Tibial artery (tissue), 4 donors: ENCODE measurements at regions of chr15 and their contacts with region 1.

Region 1: DNA sequence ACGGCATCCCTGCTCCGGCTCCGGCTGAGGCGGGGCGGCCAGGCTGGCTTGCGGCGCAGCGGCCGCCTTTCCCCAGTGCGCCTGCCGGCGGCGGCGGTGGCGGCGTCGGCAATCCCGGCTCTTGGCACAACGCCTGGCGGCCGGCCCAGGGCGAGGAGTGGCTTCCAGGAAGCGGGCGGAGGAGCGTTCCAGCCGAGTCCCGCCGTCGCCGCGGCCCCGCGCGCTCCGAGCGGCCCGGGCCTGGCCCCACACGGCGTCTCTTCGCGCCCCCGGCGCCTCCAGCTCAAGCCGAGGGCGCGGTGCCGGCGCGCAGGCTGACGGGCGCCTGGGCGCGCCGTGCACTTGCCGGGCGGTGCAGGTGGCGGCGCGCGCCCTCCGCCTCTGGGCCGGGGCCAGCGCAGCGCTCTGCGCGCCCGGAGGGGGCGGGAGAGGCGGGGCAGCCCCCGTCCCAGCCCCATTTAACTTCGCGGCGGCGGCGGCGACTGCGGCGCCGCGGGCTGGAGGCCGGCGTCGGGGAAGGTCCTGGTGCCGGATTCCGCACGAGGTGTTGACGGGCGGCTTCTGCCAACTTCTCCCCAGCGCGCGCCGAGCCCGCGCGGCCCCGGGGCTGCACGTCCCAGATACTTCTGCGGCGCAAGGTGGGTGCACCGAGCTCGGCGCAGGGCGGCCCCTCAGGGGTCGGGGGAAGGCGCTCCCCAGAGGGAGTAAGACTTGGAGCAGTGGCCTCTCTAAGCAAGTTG is at the start of gene ADAMTSL3:
- DNase-seq: peak; percentile 64 to 89
- H3K4me3 ChIP-seq: peak within 1 kb of the TSS; percentile 75 to 91
- H3K27ac ChIP-seq: peak within 1 kb of the TSS; percentile 90 to 92
- H3K4me1 ChIP-seq: peaks cover 0 to 55% (median 24%) of the 10 kb centered on the region in 4 donors
- H3K27me3 ChIP-seq: no peaks in the 10 kb centered on the region
- CTCF ChIP-seq: peak; percentile 19 to 22

Region 2: GRCh38 chr15:83747050-83747717 is 93.4 kb after region 1 on chr15:
- intact Hi-C with region 1: loop called (anchors 5 kb)
- DNase-seq: peak; percentile 62 to 73
- H3K4me3 ChIP-seq: peak overlapping the region; percentile 30 to 39
- H3K27ac ChIP-seq: peak overlapping the region; percentile 76 to 77
- H3K4me1 ChIP-seq: peaks cover 0 to 21% (median 6%) of the 10 kb centered on the region in 4 donors
- H3K27me3 ChIP-seq: no peaks in the 10 kb centered on the region
- CTCF ChIP-seq: peak; percentile 47 to 55